ENCODE measurements at regions of chr22 and their contacts with region 1.

Region 1: DNA sequence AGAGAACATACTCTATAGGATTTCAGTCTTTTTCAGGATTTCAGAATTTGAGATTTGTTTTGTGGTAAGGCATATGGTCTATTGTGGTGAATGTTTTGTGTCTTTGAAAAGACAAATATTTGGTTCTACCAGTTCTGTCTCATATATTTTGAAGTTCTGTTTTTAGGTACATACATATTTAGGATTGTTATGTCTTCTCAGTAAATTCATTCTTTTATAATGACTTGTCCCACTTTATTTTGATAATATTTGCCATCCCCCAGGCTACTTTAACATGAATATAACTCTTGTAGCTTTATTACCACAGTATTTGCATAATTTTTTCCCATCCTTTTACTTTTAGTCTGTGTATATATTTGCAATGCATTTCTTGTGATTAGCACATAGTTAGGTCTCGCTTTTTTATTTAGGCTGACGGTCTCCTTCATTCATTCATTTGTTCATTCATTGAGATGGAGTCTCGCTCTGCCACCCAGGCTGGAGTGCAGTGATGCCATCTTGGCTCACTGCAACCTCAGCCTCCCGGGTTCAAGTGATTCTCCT is 32.1 kb downstream of the MTMR3 start:
- DNase-seq: no peak
- ATAC-seq: no peak
- H3K4me3 ChIP-seq: no peak overlapping the region
- H3K4me3 Mint-ChIP-seq: no peak overlapping the region
- H3K27ac ChIP-seq: no peak overlapping the region
- H3K27ac Mint-ChIP-seq: no peak overlapping the region
- H3K4me1 ChIP-seq: peaks cover 0 to 10% of the 10 kb centered on the region in 2 experiments
- H3K4me1 Mint-ChIP-seq: peaks cover 86 to 87% (median 86%) of the 10 kb centered on the region in 3 donors
- H3K27me3 ChIP-seq: no peaks in the 10 kb centered on the region
- H3K27me3 Mint-ChIP-seq: no peaks in the 10 kb centered on the region

Region 2: GRCh38 chr22:29901354-29901753 is 13.7 kb before region 1 on chr22:
- CTCF ChIA-PET with region 1: interaction called in 1 of 2 experiments, 12 read pairs
- POLR2A ChIA-PET with region 1: no interaction called
- DNase-seq: no peak
- ATAC-seq: no peak
- H3K4me3 ChIP-seq: no peak overlapping the region
- H3K4me3 Mint-ChIP-seq: no peak overlapping the region
- H3K27ac ChIP-seq: no peak overlapping the region
- H3K27ac Mint-ChIP-seq: no peak overlapping the region
- H3K4me1 ChIP-seq: peaks cover 0 to 4% of the 10 kb centered on the region in 2 experiments
- H3K4me1 Mint-ChIP-seq: peaks cover 53 to 56% (median 53%) of the 10 kb centered on the region in 3 donors
- H3K27me3 ChIP-seq: no peaks in the 10 kb centered on the region
- H3K27me3 Mint-ChIP-seq: no peaks in the 10 kb centered on the region

Region 3: DNA sequence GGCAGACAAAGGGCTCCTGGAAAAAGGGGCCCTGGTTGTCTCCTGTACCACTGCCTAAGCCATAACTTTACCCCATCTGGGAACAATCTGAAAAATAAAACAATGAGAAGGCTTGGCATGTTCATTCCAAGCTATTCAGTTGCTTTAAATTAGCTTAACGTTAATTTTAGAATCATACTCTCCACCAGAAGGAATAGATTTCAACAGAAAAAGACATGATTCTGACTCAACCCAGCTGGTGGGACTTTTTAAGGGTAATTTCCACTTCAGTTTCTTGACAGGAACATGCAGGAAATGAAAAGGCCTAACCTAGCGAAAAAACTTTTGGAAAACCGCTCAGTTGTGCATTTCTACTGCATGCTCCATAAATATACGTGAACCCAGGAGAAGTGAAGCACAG is 433.7 kb after region 1 on chr22:
- CTCF ChIA-PET with region 1: no interaction called
- POLR2A ChIA-PET with region 1: no interaction called
- DNase-seq: no peak
- ATAC-seq: no peak
- H3K4me3 ChIP-seq: no peak overlapping the region
- H3K4me3 Mint-ChIP-seq: peak overlapping the region in 1 of 3 donors; percentile 3
- H3K27ac ChIP-seq: no peak overlapping the region
- H3K27ac Mint-ChIP-seq: peak overlapping the region; percentile 22 to 67
- H3K4me1 ChIP-seq: peaks cover 0 to 50% of the 10 kb centered on the region in 2 experiments
- H3K4me1 Mint-ChIP-seq: peaks cover 49 to 83% (median 70%) of the 10 kb centered on the region in 3 donors
- H3K27me3 ChIP-seq: no peaks in the 10 kb centered on the region
- H3K27me3 Mint-ChIP-seq: no peaks in the 10 kb centered on the region